PC-9 (cell line): ENCODE measurements at regions of chr9 and their contacts with region 1.

Region 1: DNA sequence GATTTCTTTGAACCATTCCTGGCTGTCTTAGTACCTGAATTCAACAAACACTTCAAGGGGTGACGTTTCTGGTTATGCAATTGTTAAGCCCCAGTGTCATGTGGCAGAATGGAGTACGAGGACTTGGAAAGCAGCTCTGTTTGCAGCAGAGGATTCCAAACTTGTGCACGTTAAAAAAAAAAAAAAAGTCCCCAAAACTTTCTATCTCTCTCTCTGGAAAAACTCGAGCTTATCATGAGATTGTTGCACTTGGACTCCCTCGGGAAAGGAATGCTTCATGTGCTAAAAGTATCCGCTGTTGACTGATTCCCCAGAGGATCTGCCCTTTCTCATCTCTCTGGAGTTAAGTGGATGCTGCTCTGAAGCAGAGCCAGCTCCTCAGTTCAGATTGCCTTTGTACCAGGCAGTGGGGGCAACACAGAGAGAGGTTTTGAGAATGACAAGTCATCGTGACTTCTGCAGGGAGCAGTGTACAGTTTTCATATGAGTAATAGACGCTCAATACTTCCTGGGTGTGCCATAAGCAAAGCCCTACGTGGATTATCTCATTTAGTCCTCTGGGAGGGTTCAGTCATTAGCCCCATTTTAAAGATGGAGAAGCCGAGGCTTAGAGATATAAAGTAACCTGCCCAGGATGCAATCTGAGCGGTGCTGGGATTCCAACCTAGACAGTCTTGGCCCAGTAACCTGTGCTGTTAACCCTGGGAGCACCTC is 28.1 kb downstream of the TMOD1 start:
- DNase-seq: peak; percentile 47 to 73
- H3K4me3 ChIP-seq: no peak overlapping the region
- H3K27ac ChIP-seq: peak overlapping the region; percentile 85
- H3K4me1 ChIP-seq: peaks cover 54% of the 10 kb centered on the region
- H3K27me3 ChIP-seq: no peaks in the 10 kb centered on the region
- CTCF ChIP-seq: no peak

Region 2: DNA sequence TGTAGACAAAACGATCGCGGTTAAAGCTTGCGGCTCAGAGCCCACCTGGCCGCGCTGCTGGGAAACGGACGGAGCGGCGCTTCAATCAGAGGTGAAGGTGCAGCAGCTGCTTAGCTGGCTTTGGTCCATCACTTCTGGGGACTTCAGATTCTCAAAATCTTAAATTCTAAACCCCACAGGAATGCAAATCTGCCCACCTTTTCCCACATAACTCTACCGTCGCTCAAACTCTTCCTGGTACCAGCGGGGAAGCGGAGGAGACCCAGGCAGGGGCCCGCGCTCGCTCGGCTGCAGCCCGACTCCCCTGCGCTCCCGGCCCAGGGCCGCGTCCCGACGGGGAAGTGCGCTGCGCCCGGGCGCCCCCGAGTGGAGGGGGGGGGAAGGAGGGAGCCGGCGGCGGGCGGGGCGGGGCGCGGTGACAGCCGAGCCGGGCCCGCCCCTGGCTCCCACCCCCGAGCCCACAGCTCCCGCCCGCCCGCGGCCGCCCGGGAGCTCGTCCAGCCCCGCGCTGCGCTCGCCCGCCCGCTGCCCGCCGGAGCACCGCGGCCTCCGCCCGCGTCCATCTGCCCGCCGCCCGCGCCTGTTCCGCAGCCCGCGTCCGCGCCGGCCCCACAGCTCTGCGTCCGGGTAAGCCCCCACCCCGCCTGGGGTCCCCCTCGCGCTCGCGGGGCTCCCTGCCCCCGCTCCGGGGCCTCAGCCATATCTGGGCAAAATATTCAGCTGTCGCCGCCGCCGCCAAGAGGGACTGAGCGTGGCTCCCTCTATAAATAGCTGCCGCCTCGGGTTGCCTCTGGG is 28.1 kb before region 1 on chr9 and contains the start of gene TMOD1:
- CTCF ChIA-PET with region 1: interaction called, 8 read pairs
- POLR2A ChIA-PET with region 1: interaction called, 14 read pairs
- intact Hi-C with region 1: loop called (anchors 2 kb)
- DNase-seq: peak; percentile 39 to 76
- H3K4me3 ChIP-seq: peak within 1 kb of the TSS; percentile 93
- H3K27ac ChIP-seq: no peak within 1 kb of the TSS
- H3K4me1 ChIP-seq: peaks cover 4% of the 10 kb centered on the region; the same call in 1 of the 2 replicates
- H3K27me3 ChIP-seq: no peaks in the 10 kb centered on the region
- CTCF ChIP-seq: no peak
- total RNA-seq, gene TMOD1: 6.8 and 7.1 TPM in 2 replicates

Region 3: GRCh38 chr9:97518909-97519307 is 10.6 kb before region 1 on chr9:
- CTCF ChIA-PET with region 1: no interaction called
- POLR2A ChIA-PET with region 1: interaction called, 6 read pairs
- intact Hi-C with region 1: loop called (anchors 1 kb)
- DNase-seq: peak; percentile 71 to 95
- H3K4me3 ChIP-seq: no peak overlapping the region; the same call in 1 of the 2 replicates
- H3K27ac ChIP-seq: peak overlapping the region; percentile 68
- H3K4me1 ChIP-seq: peaks cover 24% of the 10 kb centered on the region
- H3K27me3 ChIP-seq: no peaks in the 10 kb centered on the region
- CTCF ChIP-seq: no peak

Region 4: DNA sequence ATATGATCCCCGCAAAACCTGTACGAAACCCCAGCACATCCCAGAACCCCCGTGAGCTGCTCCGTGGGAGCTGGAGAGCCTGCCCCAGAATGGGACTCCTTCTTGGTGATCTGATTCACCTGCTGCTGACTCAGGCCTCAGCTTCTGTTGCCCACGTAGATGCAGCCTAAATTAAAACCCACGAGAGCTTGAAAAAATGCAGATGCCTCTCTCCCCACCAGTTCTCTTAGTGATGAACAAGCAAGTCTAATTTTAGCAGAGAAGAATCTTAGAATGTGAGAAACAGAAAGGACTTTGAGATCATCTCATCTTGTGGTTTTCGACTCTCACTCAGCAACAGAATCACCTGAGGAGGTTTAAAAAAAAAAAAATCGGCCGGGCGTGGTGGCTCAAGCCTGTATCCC is 29.6 kb after region 1 on chr9:
- CTCF ChIA-PET with region 1: interaction called, 13 read pairs
- POLR2A ChIA-PET with region 1: interaction called, 6 read pairs
- intact Hi-C with region 1: no loop called
- DNase-seq: no peak
- H3K4me3 ChIP-seq: no peak overlapping the region
- H3K27ac ChIP-seq: no peak overlapping the region
- H3K4me1 ChIP-seq: no peaks in the 10 kb centered on the region
- H3K27me3 ChIP-seq: no peaks in the 10 kb centered on the region
- CTCF ChIP-seq: no peak

Region 5: DNA sequence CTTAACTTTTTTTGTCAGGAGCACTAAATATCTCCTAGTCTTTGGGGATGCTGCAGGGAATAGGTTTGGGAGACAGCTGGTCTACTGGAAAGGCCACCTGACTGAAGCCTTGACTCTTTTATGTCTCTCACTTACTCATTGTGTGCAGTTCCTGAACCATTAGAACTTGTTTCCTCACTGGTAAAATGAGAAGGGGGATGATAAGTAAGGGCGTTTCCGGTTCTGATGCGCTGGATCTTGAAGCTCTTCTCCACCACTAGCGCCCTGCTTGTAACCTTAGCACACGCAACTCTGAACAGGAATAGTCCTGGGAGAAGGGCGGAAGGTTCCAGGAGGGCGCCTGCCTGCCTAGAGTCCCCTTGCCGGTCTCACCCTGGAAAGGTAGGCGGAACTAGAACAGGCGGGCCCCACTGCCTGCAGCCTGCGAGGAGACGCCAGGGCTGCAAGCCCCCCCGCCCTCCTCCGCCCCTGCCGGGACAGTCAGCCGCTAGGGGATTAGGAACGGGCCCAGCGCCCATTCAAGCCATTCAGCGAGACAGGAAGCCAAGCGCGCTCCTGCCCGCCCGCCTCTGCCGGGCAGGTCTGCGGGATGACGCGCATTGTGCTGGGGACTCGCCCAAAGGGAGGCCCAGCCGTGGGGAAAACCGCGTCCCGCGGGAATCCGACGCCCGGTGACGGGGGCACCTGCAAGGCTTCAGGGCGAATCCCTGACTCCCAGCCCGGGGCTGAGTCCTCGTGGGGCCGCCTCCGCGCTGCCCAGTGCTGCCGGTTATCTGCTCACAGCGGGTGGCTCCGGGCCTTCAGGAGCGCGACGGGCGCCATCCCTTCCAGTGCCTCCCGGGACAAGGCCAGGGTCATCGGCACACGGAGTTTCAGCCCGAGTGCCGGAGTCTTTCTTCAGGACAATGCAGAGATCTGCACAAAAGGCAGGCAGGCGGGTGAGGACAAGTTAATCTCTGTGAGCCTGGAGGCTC is 211.6 kb after region 1 on chr9:
- CTCF ChIA-PET with region 1: no interaction called
- POLR2A ChIA-PET with region 1: no interaction called
- intact Hi-C with region 1: no loop called
- DNase-seq: peak in 1 of 2 experiments; percentile 82
- H3K4me3 ChIP-seq: no peak overlapping the region
- H3K27ac ChIP-seq: no peak overlapping the region
- H3K4me1 ChIP-seq: no peaks in the 10 kb centered on the region
- H3K27me3 ChIP-seq: no peaks in the 10 kb centered on the region
- CTCF ChIP-seq: no peak